ENCODE measurements at regions of chr12 and their contacts with region 1.

Region 1: GRCh38 chr12:49959570-49960465 is 1.9 kb upstream of the AQP5 start:
- DNase-seq: peak in 1 of 5 donors; percentile 21
- ATAC-seq: no peak
- H3K4me3 ChIP-seq: no peak overlapping the region
- H3K27ac ChIP-seq: no peak overlapping the region
- H3K4me1 ChIP-seq: peaks cover 0 to 24% (median 5%) of the 10 kb centered on the region in 12 donors
- H3K27me3 ChIP-seq: peaks cover 0 to 91% (median 23%) of the 10 kb centered on the region in 9 donors
- CTCF ChIP-seq: no peak
- POLR2A ChIP-seq: no peak

Region 2: DNA sequence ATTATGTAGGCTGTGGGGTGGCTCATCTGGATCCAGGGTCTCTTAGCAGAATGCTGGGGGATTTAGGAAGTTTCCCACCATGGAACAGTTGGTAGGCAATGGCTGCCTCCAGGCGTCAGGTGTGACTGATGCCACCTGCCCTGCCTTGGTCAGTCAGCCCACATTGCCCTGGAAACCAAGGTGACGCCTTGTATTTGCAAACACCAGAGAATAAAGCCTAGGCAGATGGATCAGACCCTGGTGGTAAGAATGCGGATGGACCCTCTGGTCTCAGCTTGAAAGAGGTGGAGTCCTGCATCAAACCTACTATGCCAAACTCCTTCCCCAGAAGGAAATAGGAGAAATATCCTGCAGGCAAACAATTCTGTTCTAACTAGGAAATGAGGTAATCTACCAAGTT is 169.8 kb before region 1 on chr12:
- intact Hi-C with region 1: loop called in 1 of 10 experiments (anchors 10 kb)
- DNase-seq: no peak
- ATAC-seq: no peak
- H3K4me3 ChIP-seq: no peak overlapping the region
- H3K27ac ChIP-seq: no peak overlapping the region
- H3K4me1 ChIP-seq: peaks cover 0 to 2% (median 0%) of the 10 kb centered on the region in 12 donors
- H3K27me3 ChIP-seq: no peaks in the 10 kb centered on the region
- CTCF ChIP-seq: no peak
- POLR2A ChIP-seq: no peak